A549 (cell line): ENCODE measurements at regions of chr10 and their contacts with region 1.

Region 1: DNA sequence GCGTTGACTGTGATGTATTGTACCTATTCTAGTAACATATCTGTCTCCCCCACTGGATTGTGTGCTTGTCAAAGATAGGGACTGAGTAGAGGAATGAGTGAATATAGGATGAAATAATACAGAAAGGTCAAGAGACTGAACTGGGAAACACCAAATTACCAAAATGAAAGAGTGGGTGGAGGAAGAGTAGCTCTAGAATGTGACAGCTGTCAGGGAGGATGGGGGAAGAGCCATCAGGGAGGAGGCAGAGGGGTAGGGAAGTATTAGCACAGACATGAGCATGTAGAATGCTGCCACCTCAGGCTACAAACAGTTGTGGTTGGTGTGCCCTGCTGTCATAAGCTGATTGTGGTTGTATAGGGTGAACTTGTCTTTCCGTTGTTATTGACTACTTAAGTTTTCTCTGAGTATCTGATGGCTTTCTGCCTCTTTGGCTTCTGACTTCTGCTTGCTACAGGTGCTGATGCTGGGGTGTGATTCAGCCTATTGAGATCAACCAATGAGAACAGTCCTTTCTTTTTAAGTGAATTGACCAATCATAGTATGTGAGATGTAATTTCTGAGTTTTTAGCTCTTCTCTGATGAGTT is 5.6 kb downstream of the CCSER2 start:
- DNase-seq: no peak
- ATAC-seq: 0 out of 6 replicates have a peak, but pooled peaks of 1 of the 2 experiments have one; percentile 16
- H3K4me3 ChIP-seq: no peak overlapping the region
- H3K27ac ChIP-seq: no peak overlapping the region
- H3K4me1 ChIP-seq: peaks cover 27% of the 10 kb centered on the region; the same call in 2 of the 3 replicates
- CTCF ChIP-seq: no peak
- EP300 ChIP-seq: no peak
- POLR2A ChIP-seq: no peak
- RAD21 ChIP-seq: no peak

Region 2: GRCh38 chr10:84244651-84245270 is 89.2 kb before region 1 on chr10 and contains the start of gene RGR:
- CTCF ChIA-PET with region 1: no interaction called
- POLR2A ChIA-PET with region 1: no interaction called
- DNase-seq: no peak
- ATAC-seq: 0 out of 6 replicates have a peak, but pooled peaks of 1 of the 2 experiments have one; percentile 23
- H3K4me3 ChIP-seq: no peak within 1 kb of the TSS
- H3K27ac ChIP-seq: no peak within 1 kb of the TSS
- H3K4me1 ChIP-seq: no peaks in the 10 kb centered on the region
- CTCF ChIP-seq: no peak
- EP300 ChIP-seq: no peak
- POLR2A ChIP-seq: no peak
- RAD21 ChIP-seq: no peak
- polyA plus RNA-seq, gene RGR: not detected in 2 replicates

Region 3: DNA sequence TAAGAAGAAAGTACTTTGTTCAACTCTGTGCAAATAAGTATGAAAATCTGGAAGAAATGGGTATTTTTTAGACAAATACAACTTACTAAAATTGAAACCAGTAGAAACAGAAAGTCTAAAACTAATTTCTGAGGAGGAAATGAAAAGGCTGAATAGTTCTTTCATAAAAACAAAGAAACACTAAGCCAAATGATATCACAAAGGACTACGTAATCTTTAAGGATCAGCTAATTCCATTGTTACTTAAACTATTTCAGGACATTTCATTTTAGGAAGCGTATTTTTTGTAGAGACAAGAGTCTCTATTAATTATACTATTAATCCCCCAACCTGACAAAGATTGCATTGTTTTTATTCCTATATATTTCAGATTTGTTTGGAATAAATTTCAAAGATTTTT is 16.8 kb before region 1 on chr10:
- CTCF ChIA-PET with region 1: no interaction called
- POLR2A ChIA-PET with region 1: no interaction called
- DNase-seq: no peak
- ATAC-seq: no peak
- H3K4me3 ChIP-seq: no peak overlapping the region
- H3K27ac ChIP-seq: no peak overlapping the region
- H3K4me1 ChIP-seq: no peaks in the 10 kb centered on the region
- CTCF ChIP-seq: no peak
- EP300 ChIP-seq: no peak
- POLR2A ChIP-seq: no peak
- RAD21 ChIP-seq: no peak

Region 4: DNA sequence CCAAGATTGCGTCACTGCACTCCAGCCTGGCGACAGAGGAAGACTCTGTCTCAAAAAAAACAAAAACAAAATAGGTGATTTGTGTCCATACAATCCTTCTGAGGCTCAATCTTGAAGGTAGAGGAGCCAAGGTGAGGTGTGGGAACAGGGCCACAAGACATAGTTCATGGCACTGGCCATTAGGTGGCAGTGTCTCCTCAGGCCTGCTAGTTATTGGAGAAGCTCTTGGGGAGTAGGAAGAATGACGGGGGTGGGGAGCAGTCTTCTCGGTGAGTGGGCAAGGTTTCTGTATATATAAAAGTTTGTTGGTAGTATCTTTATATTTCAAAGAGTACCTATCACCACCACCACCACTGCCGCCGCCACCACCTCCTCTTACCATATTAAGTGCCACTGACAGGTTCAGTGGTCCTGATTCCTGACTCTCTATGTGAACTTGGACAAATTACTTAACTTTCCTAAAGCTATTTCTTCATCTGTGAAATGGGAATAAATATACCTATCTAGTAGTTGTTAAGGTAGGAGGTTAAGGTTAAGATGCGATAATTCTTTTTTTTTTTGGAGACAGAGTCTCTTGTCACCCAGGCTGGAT is 18.4 kb after region 1 on chr10:
- CTCF ChIA-PET with region 1: interaction called, 10 read pairs
- POLR2A ChIA-PET with region 1: no interaction called
- DNase-seq: peak; percentile 60 to 67
- ATAC-seq: peak; percentile 92 to 94
- H3K4me3 ChIP-seq: no peak overlapping the region
- H3K27ac ChIP-seq: no peak overlapping the region
- H3K4me1 ChIP-seq: peaks cover 27% of the 10 kb centered on the region; the same call in 2 of the 3 replicates
- CTCF ChIP-seq: peak; percentile 64
- EP300 ChIP-seq: no peak
- POLR2A ChIP-seq: no peak
- RAD21 ChIP-seq: peak; percentile 62 to 69; a peak in 4 of 5 replicates

Region 5: DNA sequence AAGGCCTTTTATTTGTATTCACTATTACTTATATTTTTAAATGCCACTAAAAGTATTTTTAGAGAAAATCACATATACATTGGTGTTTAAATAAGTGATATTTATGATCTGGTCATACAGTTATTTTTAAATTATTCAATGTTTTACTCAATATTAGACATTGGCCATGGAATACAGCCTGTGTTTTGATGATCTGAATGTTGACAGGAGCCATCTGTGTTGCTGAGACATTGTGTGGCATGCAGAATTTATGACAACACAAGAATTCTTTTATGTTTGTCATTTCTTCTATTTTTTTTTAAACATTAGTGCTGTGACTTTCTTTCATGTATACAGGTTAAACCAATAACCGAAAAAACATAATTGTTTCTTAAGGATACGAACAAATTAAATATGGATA is 150.6 kb after region 1 on chr10:
- CTCF ChIA-PET with region 1: no interaction called
- POLR2A ChIA-PET with region 1: no interaction called
- DNase-seq: no peak
- ATAC-seq: no peak
- H3K4me3 ChIP-seq: no peak overlapping the region
- H3K27ac ChIP-seq: no peak overlapping the region
- H3K4me1 ChIP-seq: no peaks in the 10 kb centered on the region
- CTCF ChIP-seq: no peak
- EP300 ChIP-seq: no peak
- POLR2A ChIP-seq: no peak
- RAD21 ChIP-seq: no peak